AG04450 (cell line): ENCODE measurements at regions of chr11 and their contacts with region 1.

Region 1: DNA sequence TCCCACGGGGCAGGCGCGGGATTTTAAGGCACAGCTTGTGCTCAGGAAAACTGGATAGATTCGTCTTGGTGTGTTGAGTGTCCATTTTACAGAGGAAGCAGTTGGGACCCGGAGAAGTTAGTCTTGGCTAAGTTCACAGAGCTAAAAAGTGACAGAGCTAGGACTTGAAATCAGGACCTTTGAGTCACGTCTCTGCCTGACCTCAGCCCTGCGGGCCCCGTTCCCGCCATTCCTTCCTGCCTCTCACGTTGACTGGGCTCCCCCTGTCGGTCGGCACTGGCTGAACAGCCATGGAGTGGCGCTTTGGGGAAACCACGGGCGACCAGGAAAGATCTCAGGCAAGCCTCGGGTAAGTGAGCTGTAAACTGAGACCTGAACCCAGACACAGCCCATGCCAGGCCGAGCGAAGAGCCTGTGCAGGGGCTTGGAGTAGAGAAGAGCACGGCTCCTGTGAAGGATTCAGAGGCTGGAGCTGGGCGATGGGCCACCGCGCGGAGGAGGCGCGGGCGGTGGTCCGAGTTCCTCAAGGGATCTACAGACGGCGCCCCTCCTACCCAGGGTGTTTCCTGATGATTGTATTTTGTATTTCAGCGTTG is 54.1 kb downstream of the WNT11 start:
- DNase-seq: peak; percentile 13
- H3K4me3 ChIP-seq: peak overlapping the region; percentile 43
- H3K27ac ChIP-seq: no peak overlapping the region
- H3K27me3 ChIP-seq: peaks cover 8% of the 10 kb centered on the region
- CTCF ChIP-seq: peak; percentile 93

Region 2: GRCh38 chr11:75896843-75897419 is 255.3 kb before region 1 on chr11:
- CTCF ChIA-PET with region 1: interaction called, 309 read pairs
- POLR2A ChIA-PET with region 1: interaction called, 6 read pairs
- DNase-seq: peak; percentile 7
- H3K4me3 ChIP-seq: no peak overlapping the region
- H3K27ac ChIP-seq: no peak overlapping the region
- H3K27me3 ChIP-seq: no peaks in the 10 kb centered on the region
- CTCF ChIP-seq: peak; percentile 67

Region 3: DNA sequence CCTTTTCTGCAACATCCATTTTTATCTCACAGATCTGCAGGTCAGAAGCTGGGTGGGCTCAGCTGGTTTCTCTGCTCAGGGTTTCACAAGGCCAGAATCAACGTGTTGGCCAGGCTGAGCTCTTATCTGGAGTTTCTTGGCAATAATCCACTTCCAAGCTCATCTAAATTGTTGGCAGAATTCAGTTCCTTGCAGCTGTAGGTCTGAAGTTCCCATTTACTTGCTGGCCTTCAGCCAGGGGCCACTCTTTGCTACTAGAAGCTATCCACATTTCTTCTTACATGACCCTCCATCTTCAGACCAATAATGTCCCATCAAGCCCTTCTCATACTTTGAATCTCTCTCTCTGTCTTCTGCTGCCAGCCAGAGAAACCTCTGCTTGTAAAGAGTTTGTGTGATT is 49.4 kb before region 1 on chr11:
- CTCF ChIA-PET with region 1: interaction called, 11 read pairs
- POLR2A ChIA-PET with region 1: no interaction called
- DNase-seq: no peak
- H3K4me3 ChIP-seq: no peak overlapping the region
- H3K27ac ChIP-seq: no peak overlapping the region
- H3K27me3 ChIP-seq: no peaks in the 10 kb centered on the region
- CTCF ChIP-seq: no peak

Region 4: GRCh38 chr11:76120513-76121101 is 31.6 kb before region 1 on chr11:
- CTCF ChIA-PET with region 1: interaction called, 26 read pairs
- POLR2A ChIA-PET with region 1: no interaction called
- DNase-seq: no peak
- H3K4me3 ChIP-seq: no peak overlapping the region
- H3K27ac ChIP-seq: no peak overlapping the region
- H3K27me3 ChIP-seq: no peaks in the 10 kb centered on the region
- CTCF ChIP-seq: no peak

Region 5: DNA sequence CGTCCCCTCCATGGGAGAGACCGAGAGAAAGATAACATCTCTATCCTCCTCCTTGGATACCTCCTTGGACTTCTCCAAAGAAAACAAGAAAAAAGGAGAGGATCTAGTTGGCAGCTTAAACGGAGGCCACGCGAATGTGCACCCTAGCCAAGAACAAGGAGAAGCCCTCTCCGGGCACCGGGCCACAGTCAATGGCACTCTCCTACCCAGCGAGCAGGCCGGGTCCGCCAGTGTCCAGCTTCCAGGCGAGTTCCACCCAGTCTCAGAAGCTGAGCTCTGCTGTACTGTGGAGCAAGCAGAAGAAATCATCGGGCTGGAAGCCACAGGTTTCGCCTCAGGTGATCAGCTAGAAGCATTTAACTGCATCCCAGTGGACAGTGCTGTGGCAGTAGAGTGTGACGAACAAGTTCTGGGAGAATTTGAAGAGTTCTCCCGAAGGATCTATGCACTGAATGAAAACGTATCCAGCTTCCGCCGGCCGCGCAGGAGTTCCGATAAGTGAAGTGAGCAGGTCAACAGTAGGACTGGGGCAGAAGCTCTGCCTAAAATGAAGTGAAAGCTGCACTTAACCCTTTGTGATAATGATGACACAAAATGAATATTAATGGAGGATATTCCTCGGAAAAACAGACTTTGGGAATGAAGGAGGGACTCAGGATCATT is 11.1 kb before region 1 on chr11:
- CTCF ChIA-PET with region 1: interaction called, 24 read pairs
- POLR2A ChIA-PET with region 1: no interaction called
- DNase-seq: no peak
- H3K4me3 ChIP-seq: no peak overlapping the region
- H3K27ac ChIP-seq: no peak overlapping the region
- H3K27me3 ChIP-seq: no peaks in the 10 kb centered on the region
- CTCF ChIP-seq: no peak